Naive thymus-derived CD4-positive, alpha-beta T cell (primary cell): ENCODE measurements at regions of chr10 and their contacts with region 1.

Region 1: GRCh38 chr10:92240289-92241157 is 50.4 kb downstream of the CPEB3 start:
- DNase-seq: peak in 8 of 9 donors; percentile 19 to 43 (median 28)
- ATAC-seq: peak; percentile 58
- H3K4me3 ChIP-seq: peak overlapping the region; percentile 78
- H3K4me3 Mint-ChIP-seq: peak overlapping the region; percentile 88 to 99 (median 92)
- H3K27ac ChIP-seq: peak overlapping the region; percentile 58
- H3K27ac Mint-ChIP-seq: peak overlapping the region; percentile 31 to 94 (median 71)
- H3K4me1 ChIP-seq: peaks cover 0 to 11% of the 10 kb centered on the region in 2 donors
- H3K4me1 Mint-ChIP-seq: peaks cover 14 to 57% (median 31%) of the 10 kb centered on the region in 7 donors
- H3K27me3 ChIP-seq: no peaks in the 10 kb centered on the region
- H3K27me3 Mint-ChIP-seq: peaks cover 0 to 37% (median 0%) of the 10 kb centered on the region in 5 donors

Region 2: GRCh38 chr10:92208736-92209327 is 31.7 kb before region 1 on chr10:
- CTCF ChIA-PET with region 1: no interaction called
- POLR2A ChIA-PET with region 1: no interaction called
- intact Hi-C with region 1: loop called in 1 of 2 experiments (anchors 2 kb)
- DNase-seq: no peak
- ATAC-seq: no peak
- H3K4me3 ChIP-seq: no peak overlapping the region
- H3K4me3 Mint-ChIP-seq: no peak overlapping the region
- H3K27ac ChIP-seq: no peak overlapping the region
- H3K27ac Mint-ChIP-seq: no peak overlapping the region
- H3K4me1 ChIP-seq: no peaks in the 10 kb centered on the region
- H3K4me1 Mint-ChIP-seq: peaks cover 0 to 20% (median 7%) of the 10 kb centered on the region in 7 donors
- H3K27me3 ChIP-seq: no peaks in the 10 kb centered on the region
- H3K27me3 Mint-ChIP-seq: peaks cover 0 to 6% (median 0%) of the 10 kb centered on the region in 5 donors

Region 3: DNA sequence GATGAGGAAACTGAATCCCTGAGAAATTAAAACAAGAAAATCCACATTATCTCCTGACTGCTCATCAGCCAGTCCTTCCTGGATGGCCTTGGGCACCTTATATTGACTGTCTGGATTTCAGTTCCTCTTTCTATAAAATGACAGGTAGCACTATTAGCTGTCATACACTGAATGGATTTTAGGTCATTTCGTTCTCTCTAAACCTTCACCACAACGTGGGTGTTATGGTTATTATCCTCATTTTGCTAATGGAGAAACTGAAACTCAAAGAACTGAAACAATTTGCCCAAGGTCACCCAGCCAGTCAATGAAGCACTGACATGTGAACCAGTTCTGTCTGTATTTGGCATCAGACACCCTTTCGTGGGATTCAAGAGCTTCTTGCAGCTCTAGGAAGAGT is 1027.0 kb after region 1 on chr10:
- CTCF ChIA-PET with region 1: no interaction called
- POLR2A ChIA-PET with region 1: no interaction called
- intact Hi-C with region 1: no loop called
- DNase-seq: no peak
- ATAC-seq: no peak
- H3K4me3 ChIP-seq: no peak overlapping the region
- H3K4me3 Mint-ChIP-seq: no peak overlapping the region
- H3K27ac ChIP-seq: no peak overlapping the region
- H3K27ac Mint-ChIP-seq: no peak overlapping the region
- H3K4me1 ChIP-seq: no peaks in the 10 kb centered on the region
- H3K4me1 Mint-ChIP-seq: peaks cover 0 to 7% (median 0%) of the 10 kb centered on the region in 7 donors
- H3K27me3 ChIP-seq: no peaks in the 10 kb centered on the region
- H3K27me3 Mint-ChIP-seq: no peaks in the 10 kb centered on the region